ENCODE measurements at regions of chr1 and their contacts with region 1.

Region 1: DNA sequence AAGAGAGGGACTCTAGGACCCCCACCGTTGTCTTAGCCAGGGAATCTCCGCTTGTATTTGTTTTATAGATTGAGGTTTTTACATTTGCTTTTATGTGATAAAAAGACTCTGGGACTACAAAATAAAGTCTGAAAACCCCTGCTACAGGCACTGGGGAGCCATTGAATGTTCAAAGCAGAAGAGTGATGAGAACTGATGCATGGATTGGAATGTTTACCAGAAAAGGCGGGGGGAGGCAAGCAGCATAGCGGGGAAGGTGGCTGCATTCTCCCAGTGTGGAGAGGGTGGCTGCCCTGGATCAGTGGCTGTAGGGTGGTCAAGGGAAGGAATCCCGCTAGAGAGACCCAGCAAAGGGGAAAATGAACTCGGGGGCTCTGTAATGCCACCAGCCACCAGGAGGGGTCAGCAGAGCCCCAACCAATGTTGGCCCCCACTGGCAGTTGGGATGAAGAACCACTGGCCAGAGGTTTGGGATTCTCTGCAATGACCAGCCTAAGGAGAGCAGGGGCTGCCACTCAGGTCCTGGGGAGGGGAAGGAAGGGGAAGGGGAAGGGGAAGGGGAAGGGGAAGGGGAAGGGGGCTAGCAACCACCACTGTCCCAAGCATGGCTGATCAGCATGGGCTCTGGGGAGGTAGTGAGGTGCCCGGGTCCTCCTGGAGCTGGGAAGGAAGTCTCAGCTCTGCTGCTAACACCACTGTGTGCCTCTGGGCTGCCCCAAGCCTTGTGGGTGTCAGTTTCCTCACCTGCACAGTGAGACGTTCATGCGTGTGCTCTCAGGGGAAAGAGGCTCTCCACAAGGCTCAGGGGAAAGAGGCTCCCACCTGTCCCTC is 19.2 kb upstream of the PEF1 start:
- DNase-seq: peak; percentile 22
- ATAC-seq: peak; percentile 84
- H3K4me3 ChIP-seq: no peak overlapping the region
- H3K27ac ChIP-seq: no peak overlapping the region
- H3K4me1 ChIP-seq: peaks cover 3% of the 10 kb centered on the region
- H3K27me3 ChIP-seq: no peaks in the 10 kb centered on the region
- CTCF ChIP-seq: peak; percentile 95
- POLR2A ChIP-seq: peak; percentile 21; the same call in 1 of the 2 replicates
- RAD21 ChIP-seq: peak; percentile 96

Region 2: DNA sequence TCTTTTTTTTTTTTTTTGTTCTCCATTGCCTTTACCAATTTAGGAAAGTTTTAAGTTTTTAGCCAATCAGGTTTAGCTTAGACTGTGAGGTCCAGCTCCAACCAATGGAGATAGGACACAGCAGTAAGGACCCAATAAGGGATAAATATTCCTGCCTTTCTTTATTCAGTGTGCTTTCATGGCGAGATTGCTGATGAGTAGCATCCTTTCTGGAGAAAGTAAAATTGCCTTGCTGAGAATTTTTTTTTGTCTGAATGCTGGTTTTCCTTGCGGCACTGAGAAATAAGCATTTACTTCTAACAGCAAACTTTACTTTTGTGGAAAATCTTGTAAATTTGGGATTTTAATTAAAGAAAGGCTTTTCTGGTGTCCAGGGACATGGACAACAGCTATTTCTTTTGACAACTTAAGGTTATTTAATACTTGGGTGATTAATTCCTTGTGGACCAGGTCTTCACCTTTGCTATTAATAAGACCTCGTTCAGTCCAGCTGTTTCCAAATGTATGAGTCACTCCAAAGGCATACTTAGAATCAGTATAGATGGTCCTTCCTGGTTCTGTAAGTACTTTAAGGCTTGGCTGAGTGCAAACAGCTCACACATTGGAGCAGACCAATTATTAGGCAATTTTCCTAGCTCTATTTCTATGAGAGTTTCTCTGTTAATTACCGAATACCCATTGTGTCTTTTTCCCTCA is 196.7 kb before region 1 on chr1:
- CTCF ChIA-PET with region 1: no interaction called
- POLR2A ChIA-PET with region 1: no interaction called
- dilution Hi-C with region 1: no loop called
- in situ Hi-C with region 1: no loop called
- intact Hi-C with region 1: no loop called
- DNase-seq: no peak
- ATAC-seq: no peak
- H3K4me3 ChIP-seq: no peak overlapping the region
- H3K27ac ChIP-seq: no peak overlapping the region
- H3K4me1 ChIP-seq: no peaks in the 10 kb centered on the region
- H3K27me3 ChIP-seq: peaks cover 28% of the 10 kb centered on the region
- CTCF ChIP-seq: no peak
- POLR2A ChIP-seq: no peak
- RAD21 ChIP-seq: no peak

Region 3: GRCh38 chr1:31715087-31715872 is 51.4 kb after region 1 on chr1:
- CTCF ChIA-PET with region 1: no interaction called
- POLR2A ChIA-PET with region 1: no interaction called
- dilution Hi-C with region 1: no loop called
- in situ Hi-C with region 1: no loop called
- intact Hi-C with region 1: loop called (anchors 2 kb)
- DNase-seq: peak; percentile 81
- ATAC-seq: peak; percentile 90
- H3K4me3 ChIP-seq: peak overlapping the region; percentile 14
- H3K27ac ChIP-seq: peak overlapping the region; percentile 69
- H3K4me1 ChIP-seq: peaks cover 32% of the 10 kb centered on the region
- H3K27me3 ChIP-seq: peaks cover 4% of the 10 kb centered on the region; the same call in 1 of the 2 replicates
- CTCF ChIP-seq: peak; percentile 83
- POLR2A ChIP-seq: no peak; the same call in 1 of the 2 replicates
- RAD21 ChIP-seq: peak; percentile 55

Region 4: GRCh38 chr1:31745096-31745945 is 81.5 kb after region 1 on chr1:
- CTCF ChIA-PET with region 1: interaction called, 4 read pairs
- POLR2A ChIA-PET with region 1: no interaction called
- dilution Hi-C with region 1: no loop called
- in situ Hi-C with region 1: loop called (anchors 10 kb)
- intact Hi-C with region 1: loop called (anchors 1 kb)
- DNase-seq: peak; percentile 53
- ATAC-seq: peak; percentile 96
- H3K4me3 ChIP-seq: no peak overlapping the region
- H3K27ac ChIP-seq: no peak overlapping the region
- H3K4me1 ChIP-seq: peaks cover 14% of the 10 kb centered on the region; the same call in 1 of the 2 replicates
- H3K27me3 ChIP-seq: no peaks in the 10 kb centered on the region
- CTCF ChIP-seq: peak; percentile 89
- POLR2A ChIP-seq: no peak
- RAD21 ChIP-seq: peak; percentile 85